Ovary (tissue), 10 donors: ENCODE measurements at regions of chr15 and their contacts with region 1.

Region 1: GRCh38 chr15:70679919-70680231 is 83.5 kb downstream of the UACA start:
- DNase-seq: no peak
- H3K4me3 ChIP-seq: no peak overlapping the region
- H3K27ac ChIP-seq: no peak overlapping the region
- H3K4me1 ChIP-seq: no peaks in the 10 kb centered on the region
- H3K27me3 ChIP-seq: no peaks in the 10 kb centered on the region
- CTCF ChIP-seq: no peak
- EP300 ChIP-seq: no peak
- POLR2A ChIP-seq: no peak

Region 2: GRCh38 chr15:70806992-70807712 is 127.3 kb after region 1 on chr15:
- intact Hi-C with region 1: loop called (anchors 5 to 10 kb)
- DNase-seq: peak; percentile 57 to 81 (median 70)
- H3K4me3 ChIP-seq: no peak overlapping the region
- H3K27ac ChIP-seq: peak overlapping the region in 1 of 2 donors; percentile 36
- H3K4me1 ChIP-seq: peaks cover 13% of the 10 kb centered on the region
- H3K27me3 ChIP-seq: no peaks in the 10 kb centered on the region
- CTCF ChIP-seq: no peak
- EP300 ChIP-seq: no peak
- POLR2A ChIP-seq: no peak

Region 3: GRCh38 chr15:70815644-70816043 is 135.8 kb after region 1 on chr15:
- intact Hi-C with region 1: loop called in 3 of 4 experiments (anchors 5 to 10 kb)
- DNase-seq: no peak
- H3K4me3 ChIP-seq: no peak overlapping the region
- H3K27ac ChIP-seq: no peak overlapping the region
- H3K4me1 ChIP-seq: peaks cover 1% of the 10 kb centered on the region
- H3K27me3 ChIP-seq: no peaks in the 10 kb centered on the region
- CTCF ChIP-seq: no peak
- EP300 ChIP-seq: no peak
- POLR2A ChIP-seq: no peak

Region 4: GRCh38 chr15:70875001-70875782 is 195.3 kb after region 1 on chr15:
- intact Hi-C with region 1: loop called in 2 of 4 experiments (anchors 10 kb)
- DNase-seq: no peak
- H3K4me3 ChIP-seq: no peak overlapping the region
- H3K27ac ChIP-seq: no peak overlapping the region
- H3K4me1 ChIP-seq: peaks cover 2% of the 10 kb centered on the region
- H3K27me3 ChIP-seq: no peaks in the 10 kb centered on the region
- CTCF ChIP-seq: peak in 2 of 3 donors; percentile 53 to 55
- EP300 ChIP-seq: no peak
- POLR2A ChIP-seq: no peak